A549 (cell line): ENCODE measurements at regions of chr19 and their contacts with region 1.

Region 1: DNA sequence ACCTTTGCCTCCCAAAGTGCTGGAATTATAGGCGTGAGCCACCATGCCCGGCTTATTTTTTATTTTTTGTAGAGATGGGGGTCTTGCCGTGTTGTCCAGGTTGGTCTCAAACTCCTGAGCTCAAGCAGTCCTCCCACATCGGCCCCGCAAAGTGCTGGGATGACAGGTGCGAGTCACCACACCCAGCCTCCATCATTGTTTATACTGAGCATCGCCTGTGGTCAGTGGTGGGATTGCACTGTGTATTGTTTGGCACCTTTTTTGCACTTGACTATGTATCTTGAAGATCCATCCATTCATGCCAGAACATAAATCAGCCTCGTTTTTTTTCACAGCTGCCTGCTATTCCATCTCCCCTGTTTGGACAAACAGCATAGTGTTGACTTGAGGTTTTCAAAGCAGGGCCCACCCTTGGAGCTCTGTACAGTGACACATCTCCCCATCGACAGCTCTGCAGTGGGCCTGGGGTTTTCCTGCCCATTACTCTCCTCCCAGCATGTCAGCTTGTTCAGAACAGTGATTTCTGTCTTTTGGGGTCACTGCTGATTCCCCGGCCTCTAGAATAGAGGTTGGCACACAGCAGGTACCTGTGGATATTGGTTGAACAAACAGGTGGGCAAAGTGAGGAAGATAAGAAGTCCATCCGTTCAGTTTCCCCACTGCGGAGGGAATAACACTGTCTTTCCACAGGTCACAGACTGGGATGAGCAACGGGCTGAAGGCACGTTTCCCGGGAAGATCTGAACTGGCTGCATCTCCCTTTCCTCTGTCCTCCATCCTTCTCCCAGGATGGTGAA is 8.2 kb upstream of the UPK1A start:
- DNase-seq: peak; percentile 50 to 68
- ATAC-seq: peak; percentile 91 to 94
- H3K4me3 ChIP-seq: no peak overlapping the region
- H3K27ac ChIP-seq: no peak overlapping the region
- H3K4me1 ChIP-seq: no peaks in the 10 kb centered on the region
- CTCF ChIP-seq: no peak
- EP300 ChIP-seq: no peak
- POLR2A ChIP-seq: no peak
- RAD21 ChIP-seq: peak in 1 of 2 experiments; percentile 17; a peak in 1 of 5 replicates

Region 2: DNA sequence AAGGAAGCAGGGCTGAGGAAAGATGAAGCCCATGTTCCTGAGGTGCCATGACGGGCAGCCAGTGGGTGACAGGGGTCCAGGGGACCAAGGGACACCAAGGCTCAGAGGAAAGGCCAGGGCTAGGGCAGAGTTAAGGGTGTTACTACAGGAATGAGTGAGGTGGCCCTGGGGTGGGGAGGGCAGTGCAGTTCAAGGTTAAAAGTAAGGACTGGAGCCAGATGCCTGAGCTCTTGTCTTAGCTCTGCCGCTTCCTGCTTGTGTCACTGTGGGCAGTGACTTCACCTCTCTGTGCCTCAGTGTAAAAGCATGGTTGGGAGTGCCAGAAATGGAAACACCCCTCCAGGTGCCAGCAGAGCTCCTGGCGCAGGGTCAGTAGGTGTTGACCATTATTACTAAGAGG is 21.5 kb before region 1 on chr19:
- CTCF ChIA-PET with region 1: interaction called, 12 read pairs
- POLR2A ChIA-PET with region 1: interaction called, 3 read pairs
- DNase-seq: no peak
- ATAC-seq: no peak
- H3K4me3 ChIP-seq: no peak overlapping the region
- H3K27ac ChIP-seq: no peak overlapping the region
- H3K4me1 ChIP-seq: no peaks in the 10 kb centered on the region
- CTCF ChIP-seq: no peak
- EP300 ChIP-seq: no peak
- POLR2A ChIP-seq: no peak; the same call in 1 of the 2 replicates
- RAD21 ChIP-seq: no peak

Region 3: GRCh38 chr19:35673121-35673804 is 15.2 kb after region 1 on chr19:
- CTCF ChIA-PET with region 1: interaction called, 16 read pairs
- POLR2A ChIA-PET with region 1: interaction called, 8 read pairs
- DNase-seq: peak; percentile 85 to 99
- ATAC-seq: peak; percentile 94 to 97
- H3K4me3 ChIP-seq: peak overlapping the region; percentile 47
- H3K27ac ChIP-seq: peak overlapping the region; percentile 42 to 77
- H3K4me1 ChIP-seq: no peaks in the 10 kb centered on the region
- CTCF ChIP-seq: no peak
- EP300 ChIP-seq: no peak
- POLR2A ChIP-seq: no peak
- RAD21 ChIP-seq: no peak

Region 4: GRCh38 chr19:35879770-35880317 is 221.7 kb after region 1 on chr19:
- CTCF ChIA-PET with region 1: no interaction called
- POLR2A ChIA-PET with region 1: no interaction called
- DNase-seq: peak; percentile 93 to 98
- ATAC-seq: peak; percentile 87 to 95
- H3K4me3 ChIP-seq: no peak overlapping the region
- H3K27ac ChIP-seq: no peak overlapping the region
- H3K4me1 ChIP-seq: peaks cover 7% of the 10 kb centered on the region
- CTCF ChIP-seq: no peak
- EP300 ChIP-seq: no peak
- POLR2A ChIP-seq: no peak
- RAD21 ChIP-seq: 0 out of 5 replicates have a peak, but pooled peaks of 1 of the 2 experiments have one; percentile 5